AG04449 (cell line): ENCODE measurements at regions of chr3 and their contacts with region 1.

Region 1: DNA sequence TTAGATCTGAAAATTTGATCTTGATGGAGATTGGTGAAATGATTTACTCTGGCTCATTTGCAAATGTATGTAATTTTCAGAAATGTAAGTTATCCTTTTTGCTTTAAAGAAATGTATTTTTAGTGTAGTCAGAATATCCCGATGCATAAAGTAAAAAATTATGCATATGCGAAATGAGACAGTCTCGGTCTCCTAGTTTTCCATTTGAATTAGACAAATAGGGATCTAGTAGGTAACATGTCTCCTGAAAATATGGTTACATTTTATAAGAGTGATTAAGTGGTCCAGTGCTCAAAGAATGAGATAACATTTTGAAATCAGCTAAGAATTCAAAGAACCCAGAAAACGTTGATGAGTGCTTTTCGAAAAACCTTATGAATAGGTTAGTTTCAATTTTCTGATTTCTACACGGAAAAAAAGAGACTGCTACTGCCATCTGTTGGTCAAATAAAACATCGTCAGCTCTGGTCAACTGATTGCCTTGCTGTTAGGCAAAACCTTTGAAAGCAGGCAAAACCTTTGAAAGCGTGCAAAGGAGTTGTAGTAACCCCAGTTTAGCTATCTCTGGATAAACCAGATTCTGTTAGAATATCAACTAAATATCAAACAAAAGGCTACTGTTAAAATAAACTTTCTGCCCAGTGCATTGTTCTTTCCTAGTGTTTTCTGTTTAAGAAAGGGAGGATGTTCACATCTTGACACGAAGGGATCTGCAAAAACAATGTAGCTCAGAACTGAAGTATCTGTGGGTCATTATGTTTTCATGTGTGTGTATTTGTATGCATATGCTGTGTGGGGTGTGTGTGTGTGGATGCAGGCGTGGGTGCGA is 59.3 kb upstream of the CHMP2B start:
- DNase-seq: no peak
- H3K4me3 ChIP-seq: peak overlapping the region; percentile 37
- CTCF ChIP-seq: peak; percentile 52

Region 2: GRCh38 chr3:86702381-86702958 is 465.4 kb before region 1 on chr3:
- CTCF ChIA-PET with region 1: interaction called, 11 read pairs
- POLR2A ChIA-PET with region 1: no interaction called
- DNase-seq: no peak
- H3K4me3 ChIP-seq: no peak overlapping the region
- CTCF ChIP-seq: peak; percentile 22

Region 3: GRCh38 chr3:87006844-87007439 is 160.9 kb before region 1 on chr3:
- CTCF ChIA-PET with region 1: interaction called, 11 read pairs
- POLR2A ChIA-PET with region 1: no interaction called
- DNase-seq: no peak
- H3K4me3 ChIP-seq: no peak overlapping the region
- CTCF ChIP-seq: peak; percentile 29

Region 4: DNA sequence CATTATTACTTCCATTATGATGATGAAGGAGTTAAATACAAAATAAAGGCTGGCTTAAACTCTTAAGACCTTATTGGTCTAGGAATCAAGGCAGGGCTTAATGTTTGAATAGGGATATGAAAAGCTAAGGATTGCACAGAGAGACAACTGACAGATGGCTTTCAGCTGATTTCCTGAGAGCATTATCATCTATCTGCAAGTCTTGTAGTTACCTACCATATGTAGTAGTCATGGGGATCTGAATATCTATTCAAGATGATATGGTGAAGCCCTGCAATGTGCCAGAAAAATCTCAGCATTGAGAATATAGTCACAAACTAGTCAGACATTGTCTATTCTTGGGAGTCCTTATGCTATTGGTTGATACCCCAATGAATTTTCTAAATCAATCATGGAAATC is 11.8 kb after region 1 on chr3:
- CTCF ChIA-PET with region 1: interaction called, 10 read pairs
- POLR2A ChIA-PET with region 1: no interaction called
- DNase-seq: no peak
- H3K4me3 ChIP-seq: no peak overlapping the region
- CTCF ChIP-seq: no peak

Region 5: DNA sequence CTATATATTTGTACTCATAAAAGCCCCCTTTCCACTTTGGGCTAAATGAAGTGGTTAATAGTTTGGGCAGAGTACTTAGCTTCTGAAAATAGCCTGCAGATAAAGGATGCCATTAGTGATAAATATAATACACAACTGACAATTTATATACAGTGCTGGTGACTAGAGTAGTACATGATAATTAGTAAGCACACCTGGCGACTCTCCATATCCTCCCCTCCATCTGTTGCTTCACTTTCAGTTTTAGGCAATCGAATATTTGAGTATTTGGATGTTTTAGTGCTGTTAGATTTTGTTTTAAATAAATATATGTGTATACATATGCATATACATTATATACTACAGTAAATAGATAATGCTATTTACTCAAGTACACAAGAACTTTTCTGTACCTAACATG is 23.3 kb after region 1 on chr3:
- CTCF ChIA-PET with region 1: interaction called, 15 read pairs
- POLR2A ChIA-PET with region 1: no interaction called
- DNase-seq: no peak
- H3K4me3 ChIP-seq: no peak overlapping the region
- CTCF ChIP-seq: no peak